CD4-positive, alpha-beta memory T cell (primary cell): ENCODE measurements at regions of chr21 and their contacts with region 1.

Region 1: DNA sequence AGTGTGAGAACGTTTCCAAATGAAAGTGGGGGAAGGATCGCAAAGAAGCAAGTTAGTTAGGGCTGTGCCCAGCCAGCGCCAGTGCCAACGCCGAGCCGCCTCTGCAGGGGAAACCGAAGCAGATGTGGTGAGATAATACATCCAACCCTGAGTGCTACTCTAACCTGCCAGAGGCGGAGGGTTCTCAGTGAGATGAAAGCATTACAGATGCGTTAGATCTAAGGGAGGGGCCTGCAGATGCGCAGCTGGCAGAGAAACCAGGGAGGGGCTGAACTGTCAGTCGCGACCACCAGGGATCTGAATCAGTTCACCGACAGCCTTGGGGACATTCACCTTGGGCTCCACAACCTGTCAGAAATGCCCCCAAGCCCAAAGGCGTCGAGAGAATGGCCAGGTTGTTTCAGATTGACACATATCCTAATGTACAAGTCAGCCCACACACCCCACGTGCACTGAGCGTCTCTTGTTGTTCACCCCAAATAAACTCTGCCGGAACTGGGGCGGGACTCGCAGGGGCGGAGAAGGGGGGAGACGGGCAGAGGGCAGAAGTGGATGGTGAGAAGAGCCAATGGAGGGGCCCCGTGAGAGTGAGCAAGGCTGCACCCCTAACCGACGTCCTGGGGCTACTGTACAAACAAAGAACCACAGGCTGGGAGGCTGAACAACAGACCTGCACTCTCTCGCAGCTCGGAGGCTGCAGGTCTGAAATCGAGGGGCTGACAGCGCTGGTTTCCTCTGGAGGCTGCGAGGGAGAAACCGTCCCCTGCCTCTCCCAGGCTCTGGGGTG is 8.7 kb upstream of the UMODL1 start:
- DNase-seq: peak; percentile 96 to 98 (median 97)
- H3K4me3 ChIP-seq: peak overlapping the region; percentile 64 to 97
- H3K4me3 Mint-ChIP-seq: peak overlapping the region; percentile 84 to 96 (median 90)
- H3K27ac ChIP-seq: peak overlapping the region; percentile 68
- H3K27ac Mint-ChIP-seq: peak overlapping the region; percentile 99 to 100 (median 99)
- H3K4me1 ChIP-seq: peaks cover 45% of the 10 kb centered on the region
- H3K4me1 Mint-ChIP-seq: peaks cover 26 to 73% (median 51%) of the 10 kb centered on the region in 4 donors
- H3K27me3 ChIP-seq: no peaks in the 10 kb centered on the region
- H3K27me3 Mint-ChIP-seq: no peaks in the 10 kb centered on the region

Region 2: DNA sequence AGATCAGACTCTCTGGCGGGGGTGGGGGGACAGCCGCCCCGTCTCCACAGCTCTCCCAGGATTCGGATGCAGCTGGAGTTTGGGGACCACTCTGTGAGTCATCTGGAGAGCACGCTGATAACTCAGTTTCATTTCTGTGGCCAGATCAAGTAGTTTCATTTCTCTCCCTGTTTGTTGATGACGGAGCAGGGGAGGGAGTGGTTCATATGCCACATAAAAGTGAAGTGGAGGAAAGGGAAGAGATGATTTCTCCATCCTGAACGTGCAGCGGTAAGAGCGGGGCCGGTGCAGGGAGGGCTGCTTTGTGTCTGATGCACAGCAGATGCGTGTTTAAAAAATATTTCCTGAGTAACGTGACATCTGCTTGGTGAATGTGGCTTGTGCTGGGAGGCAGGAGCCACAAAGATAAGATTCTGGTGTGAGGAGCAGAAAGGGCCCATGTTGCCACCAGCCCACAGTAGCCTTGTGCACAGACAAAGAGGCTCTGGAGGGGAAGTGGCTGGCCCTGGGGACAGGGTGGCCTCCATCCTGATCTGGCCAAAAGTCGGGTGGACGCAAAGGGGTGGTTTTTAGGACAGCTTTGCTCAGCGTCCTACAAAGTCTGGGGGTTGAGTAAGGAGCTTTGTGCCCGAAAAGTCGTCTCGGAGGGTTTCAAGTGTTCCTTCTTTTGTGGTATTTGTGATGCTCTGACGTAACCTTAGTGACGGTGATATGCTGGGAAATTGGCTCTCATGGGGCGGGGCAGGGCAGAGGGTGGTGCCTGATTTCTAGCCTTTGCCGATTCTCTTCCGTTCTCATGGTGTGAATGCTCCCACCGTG is 700.4 kb before region 1 on chr21 and contains the start of gene MX2:
- CTCF ChIA-PET with region 1: no interaction called
- POLR2A ChIA-PET with region 1: no interaction called
- intact Hi-C with region 1: loop called (anchors 5 kb)
- DNase-seq: peak; percentile 91 to 94 (median 94)
- H3K4me3 ChIP-seq: peak within 1 kb of the TSS; percentile 27 to 91
- H3K4me3 Mint-ChIP-seq: peak within 1 kb of the TSS; percentile 89 to 97 (median 94)
- H3K27ac ChIP-seq: peak within 1 kb of the TSS; percentile 93
- H3K27ac Mint-ChIP-seq: peak within 1 kb of the TSS; percentile 99 to 100 (median 100)
- H3K4me1 ChIP-seq: peaks cover 40% of the 10 kb centered on the region
- H3K4me1 Mint-ChIP-seq: peaks cover 37 to 61% (median 55%) of the 10 kb centered on the region in 4 donors
- H3K27me3 ChIP-seq: no peaks in the 10 kb centered on the region
- H3K27me3 Mint-ChIP-seq: no peaks in the 10 kb centered on the region
- total RNA-seq, gene MX2: 98.7 to 107 TPM

Region 3: DNA sequence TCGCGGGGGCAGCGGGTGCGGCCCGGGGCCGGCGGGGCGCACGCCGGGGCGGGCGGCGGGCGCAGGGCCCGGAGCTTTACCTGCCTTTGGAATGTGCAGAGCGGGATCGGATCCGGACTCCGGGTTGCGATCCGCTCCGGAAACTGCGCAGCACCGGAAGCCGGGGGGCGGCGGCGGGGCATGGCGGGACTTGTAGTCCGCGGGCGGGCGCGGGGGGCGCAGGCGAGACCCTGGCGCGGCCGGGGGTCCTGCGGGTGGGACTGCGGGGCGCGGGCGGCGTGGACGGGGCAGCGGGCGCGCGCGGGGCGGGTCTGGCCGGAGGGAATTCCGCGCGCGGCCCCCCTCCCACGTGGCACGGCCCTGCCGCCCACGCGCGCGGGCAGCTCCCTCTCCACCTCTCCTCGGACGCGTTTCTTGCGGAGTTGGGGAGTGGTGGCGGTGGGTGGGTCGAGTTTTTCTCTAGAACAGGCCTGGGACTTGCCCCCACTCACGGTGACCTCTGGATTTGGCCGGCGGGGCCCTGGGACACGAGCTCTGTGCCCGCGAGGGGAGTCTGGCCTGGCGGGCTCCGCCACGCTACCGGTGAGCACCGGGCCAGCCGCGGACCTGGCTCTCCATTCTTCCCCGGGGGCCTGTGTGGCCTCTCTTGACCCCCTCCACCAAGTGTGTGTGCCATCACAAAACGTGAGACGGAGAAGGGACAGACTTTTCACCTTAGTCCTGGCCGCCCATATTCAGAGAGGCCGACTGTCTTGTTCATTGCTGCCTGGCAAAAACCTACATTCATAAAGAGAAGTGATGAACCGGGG is 183.0 kb before region 1 on chr21 and contains the start of gene PRDM15:
- CTCF ChIA-PET with region 1: interaction called, 4 read pairs
- POLR2A ChIA-PET with region 1: interaction called, 39 read pairs
- intact Hi-C with region 1: loop called (anchors 1 kb)
- DNase-seq: peak; percentile 73 to 81 (median 75)
- H3K4me3 ChIP-seq: peak within 1 kb of the TSS; percentile 60 to 74
- H3K4me3 Mint-ChIP-seq: peak within 1 kb of the TSS; percentile 90 to 93 (median 92)
- H3K27ac ChIP-seq: peak within 1 kb of the TSS; percentile 69
- H3K27ac Mint-ChIP-seq: peak within 1 kb of the TSS; percentile 85 to 97 (median 96)
- H3K4me1 ChIP-seq: peaks cover 26% of the 10 kb centered on the region
- H3K4me1 Mint-ChIP-seq: peaks cover 14 to 37% (median 27%) of the 10 kb centered on the region in 4 donors
- H3K27me3 ChIP-seq: no peaks in the 10 kb centered on the region
- H3K27me3 Mint-ChIP-seq: no peaks in the 10 kb centered on the region
- total RNA-seq, gene PRDM15: 14.2 to 14.3 TPM

Region 4: GRCh38 chr21:41926117-41926806 is 136.2 kb before region 1 on chr21:
- CTCF ChIA-PET with region 1: interaction called, 3 read pairs
- POLR2A ChIA-PET with region 1: interaction called, 52 read pairs
- intact Hi-C with region 1: loop called (anchors 1 kb)
- DNase-seq: peak; percentile 48 to 70 (median 60)
- H3K4me3 ChIP-seq: peak overlapping the region; percentile 45 to 66
- H3K4me3 Mint-ChIP-seq: peak overlapping the region; percentile 93 to 100 (median 96)
- H3K27ac ChIP-seq: peak overlapping the region; percentile 74
- H3K27ac Mint-ChIP-seq: peak overlapping the region; percentile 90 to 100 (median 99)
- H3K4me1 ChIP-seq: peaks cover 37% of the 10 kb centered on the region
- H3K4me1 Mint-ChIP-seq: peaks cover 27 to 48% (median 36%) of the 10 kb centered on the region in 4 donors
- H3K27me3 ChIP-seq: no peaks in the 10 kb centered on the region
- H3K27me3 Mint-ChIP-seq: peaks cover 0 to 2% of the 10 kb centered on the region in 2 donors

Region 5: DNA sequence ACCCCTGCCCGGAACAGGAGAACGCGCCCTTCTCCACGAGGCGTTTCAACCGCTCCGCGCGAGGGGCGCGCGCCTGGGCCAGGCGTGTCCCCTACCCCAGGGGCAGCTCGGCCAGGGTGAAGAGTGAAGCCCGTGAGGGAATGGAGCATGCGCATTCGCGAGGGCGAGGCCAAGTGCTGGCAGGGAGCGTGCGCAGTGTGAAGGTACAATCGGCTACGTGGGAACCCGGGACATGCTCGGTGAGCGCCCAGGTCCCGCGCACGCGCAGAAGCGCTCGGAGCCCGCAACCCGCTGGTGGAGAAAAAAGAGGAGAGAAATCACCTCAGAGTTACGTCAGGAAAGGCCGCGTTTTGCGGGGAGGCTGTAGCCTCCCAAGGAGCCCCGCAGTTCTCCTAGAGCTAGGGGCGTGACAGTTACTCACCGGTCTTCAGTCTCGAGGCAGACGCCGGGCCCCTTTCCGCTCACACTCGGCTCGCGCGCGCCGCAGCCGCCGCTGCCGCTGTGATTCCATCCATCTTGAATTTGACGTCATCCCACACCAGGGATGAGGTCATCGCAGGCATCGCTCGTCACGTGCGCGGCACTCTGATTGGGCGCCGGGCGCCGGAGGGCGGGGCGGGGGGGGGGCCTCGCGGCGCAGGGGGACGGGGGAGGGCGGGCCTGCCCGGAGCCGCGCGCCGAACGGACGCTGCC is 52.5 kb before region 1 on chr21 and contains the start of gene ZBTB21:
- CTCF ChIA-PET with region 1: interaction called, 19 read pairs
- POLR2A ChIA-PET with region 1: interaction called, 147 read pairs
- intact Hi-C with region 1: loop called (anchors 1 kb)
- DNase-seq: peak; percentile 98
- H3K4me3 ChIP-seq: peak within 1 kb of the TSS; percentile 37 to 83
- H3K4me3 Mint-ChIP-seq: peak within 1 kb of the TSS; percentile 96 to 100 (median 98)
- H3K27ac ChIP-seq: peak within 1 kb of the TSS; percentile 91
- H3K27ac Mint-ChIP-seq: peak within 1 kb of the TSS; percentile 100
- H3K4me1 ChIP-seq: peaks cover 19% of the 10 kb centered on the region
- H3K4me1 Mint-ChIP-seq: peaks cover 18 to 52% (median 27%) of the 10 kb centered on the region in 4 donors
- H3K27me3 ChIP-seq: no peaks in the 10 kb centered on the region
- H3K27me3 Mint-ChIP-seq: peaks cover 1 to 5% of the 10 kb centered on the region in 2 donors
- total RNA-seq, gene ZBTB21: 20.4 to 21.7 TPM

Region 6: DNA sequence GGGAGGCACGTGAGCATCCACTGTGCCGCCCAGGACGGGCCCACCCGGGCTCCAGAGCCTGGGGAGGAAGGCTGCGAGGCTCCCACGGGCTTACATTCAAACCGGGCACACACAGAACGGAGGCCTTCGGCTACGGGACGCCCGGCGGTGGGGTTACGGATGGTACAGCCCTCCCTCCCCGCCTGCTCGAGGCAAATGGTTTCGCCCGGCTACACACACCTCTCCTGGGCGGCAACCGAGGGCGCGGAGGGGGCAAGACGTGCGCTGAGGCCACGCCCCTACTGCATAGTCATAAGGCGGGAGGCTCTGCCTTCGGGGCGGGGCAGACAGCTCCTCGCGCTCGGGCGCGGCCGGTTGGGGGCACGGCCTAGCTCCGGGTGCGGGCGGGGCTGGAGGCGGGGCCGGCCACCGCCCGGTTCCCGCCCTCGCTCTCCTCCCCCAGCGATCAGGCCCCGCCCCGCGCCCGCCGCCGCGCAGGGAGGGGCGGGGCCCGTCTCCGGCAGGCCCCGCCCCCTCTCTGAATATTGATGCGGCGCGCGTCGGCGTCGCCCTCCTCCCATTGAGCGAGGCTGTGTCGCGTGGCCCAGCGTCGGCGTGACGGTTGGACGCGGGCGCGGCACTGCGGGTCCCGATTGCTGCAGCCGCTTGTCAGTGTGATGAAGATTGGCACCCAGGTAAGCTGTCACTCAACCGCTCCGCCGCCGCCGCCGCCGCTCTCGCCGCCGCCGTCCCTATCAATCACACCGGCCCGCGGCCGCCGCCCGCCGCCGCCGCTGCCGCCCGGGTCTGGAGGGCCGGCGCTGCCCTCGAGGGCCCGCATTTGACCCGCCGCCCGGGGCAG is 911.8 kb after region 1 on chr21 and contains the start of gene PKNOX1:
- CTCF ChIA-PET with region 1: no interaction called
- POLR2A ChIA-PET with region 1: no interaction called
- intact Hi-C with region 1: loop called (anchors 2 kb)
- DNase-seq: peak; percentile 99 to 100 (median 99)
- H3K4me3 ChIP-seq: peak within 1 kb of the TSS; percentile 70 to 94
- H3K4me3 Mint-ChIP-seq: peak within 1 kb of the TSS; percentile 84 to 95 (median 90)
- H3K27ac ChIP-seq: peak within 1 kb of the TSS; percentile 91
- H3K27ac Mint-ChIP-seq: peak within 1 kb of the TSS; percentile 91 to 98 (median 93)
- H3K4me1 ChIP-seq: peaks cover 25% of the 10 kb centered on the region
- H3K4me1 Mint-ChIP-seq: peaks cover 16 to 42% (median 30%) of the 10 kb centered on the region in 4 donors
- H3K27me3 ChIP-seq: no peaks in the 10 kb centered on the region
- H3K27me3 Mint-ChIP-seq: no peaks in the 10 kb centered on the region
- total RNA-seq, gene PKNOX1: 21.5 to 24.8 TPM